ENCODE measurements at regions of chr16 and their contacts with region 1.

Region 1: DNA sequence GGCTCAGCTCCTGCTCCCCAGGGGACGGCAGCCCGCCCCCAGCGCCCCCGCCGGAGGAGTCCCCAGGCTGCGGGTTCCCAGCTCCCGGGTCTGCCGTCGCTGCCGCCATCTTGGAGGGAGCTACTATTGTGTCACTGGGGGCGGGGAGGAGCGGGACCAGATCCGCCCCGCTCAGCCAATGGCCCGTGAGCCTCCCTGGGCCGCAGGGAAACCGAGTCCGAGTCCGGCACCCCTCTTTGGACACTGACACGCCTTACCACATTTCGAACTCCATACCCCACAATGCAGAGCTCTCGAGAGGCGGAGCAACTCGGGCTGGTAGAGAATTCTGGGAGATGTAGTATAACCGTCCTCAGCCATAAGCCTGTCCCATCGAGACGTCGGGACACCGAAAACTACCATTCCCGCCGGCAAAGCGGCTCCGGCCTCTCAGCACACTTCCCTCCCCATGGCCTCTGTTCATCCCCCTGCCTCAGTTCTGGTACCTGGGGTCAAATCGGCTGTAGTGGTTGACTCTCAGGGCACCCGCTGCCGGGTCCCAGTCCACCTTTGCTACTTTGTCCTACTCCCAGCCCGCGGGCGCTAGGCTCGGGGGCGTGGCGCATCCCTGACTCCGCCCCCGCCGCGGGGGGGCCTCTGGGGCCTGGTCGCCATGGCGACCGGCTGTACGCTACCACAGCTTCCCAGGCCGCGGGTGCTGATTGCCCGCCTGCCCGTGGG is at the starts of genes RANBP10 and TSNAXIP1:
- DNase-seq: peak; percentile 91 to 99 (median 98)
- H3K4me3 ChIP-seq: peak within 1 kb of the TSS; percentile 62 to 100 (median 93)
- H3K27ac ChIP-seq: peak within 1 kb of the TSS in 57 of 59 donors; percentile 3 to 93 (median 80)
- H3K27me3 ChIP-seq: no peaks in the 10 kb centered on the region
- CTCF ChIP-seq: peak in 35 of 56 donors; percentile 2 to 66 (median 24)
- total RNA-seq, gene RANBP10: 13.9 to 32.6 (median 21.2) TPM
- total RNA-seq, gene TSNAXIP1: 3.1 to 16.5 (median 8.5) TPM

Region 2: GRCh38 chr16:67561824-67562525 is 244.6 kb before region 1 on chr16:
- intact Hi-C with region 1: loop called (anchors 2 to 5 kb)
- DNase-seq: peak; percentile 79 to 93 (median 88)
- H3K4me3 ChIP-seq: peak overlapping the region; percentile 40 to 100 (median 92)
- H3K27ac ChIP-seq: peak overlapping the region; percentile 31 to 100 (median 99)
- H3K27me3 ChIP-seq: no peaks in the 10 kb centered on the region
- CTCF ChIP-seq: peak in 21 of 56 donors; percentile 6 to 46 (median 23)

Region 3: GRCh38 chr16:67841764-67842508 is 35.3 kb after region 1 on chr16 and contains the start of gene THAP11:
- intact Hi-C with region 1: loop called in 1 of 2 experiments (anchors 2 kb)
- DNase-seq: peak; percentile 88 to 95 (median 91)
- H3K4me3 ChIP-seq: peak within 1 kb of the TSS; percentile 73 to 100 (median 94)
- H3K27ac ChIP-seq: peak within 1 kb of the TSS; percentile 97 to 100 (median 100)
- H3K27me3 ChIP-seq: no peaks in the 10 kb centered on the region
- CTCF ChIP-seq: peak; percentile 77 to 98 (median 94)
- total RNA-seq, gene THAP11: 17.7 to 30.0 (median 24.0) TPM

Region 4: DNA sequence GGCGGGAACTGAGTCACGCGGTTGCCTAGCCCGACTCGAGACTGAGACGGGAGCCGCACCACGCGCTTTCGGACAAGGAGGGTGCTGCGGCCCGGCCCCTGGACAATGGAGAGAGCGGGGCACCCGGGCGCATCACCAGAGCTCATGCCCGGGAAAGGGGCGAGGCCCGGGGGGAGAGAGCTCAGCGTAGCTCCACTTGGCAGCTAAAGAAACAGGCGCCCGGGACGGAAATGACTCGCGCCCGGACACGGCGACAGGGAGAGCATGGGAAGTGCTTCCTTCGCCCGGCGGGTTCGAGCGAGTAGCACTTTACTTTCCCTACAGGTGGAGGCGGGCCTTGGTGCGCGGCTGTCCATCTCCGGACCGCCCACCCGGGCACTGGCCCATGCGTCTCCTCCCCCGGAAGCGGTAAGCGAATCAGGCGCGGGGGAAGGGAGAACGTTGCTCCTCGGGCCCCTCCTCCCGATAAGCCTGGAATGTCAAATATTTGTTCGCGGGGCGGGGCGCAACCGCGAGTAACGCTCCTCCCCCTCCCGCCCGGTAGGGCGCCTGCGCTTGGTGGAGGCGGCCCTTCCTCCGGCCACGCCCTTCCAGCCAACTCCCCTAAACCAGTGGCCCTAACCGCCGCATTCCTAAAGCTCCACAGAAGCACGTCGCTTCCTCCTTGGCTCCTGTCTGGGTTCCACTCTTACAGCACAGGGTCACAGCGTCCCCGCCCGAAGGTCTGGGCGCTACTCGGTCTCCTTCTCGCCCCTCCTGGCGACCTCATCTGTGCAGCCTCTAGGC is 430.8 kb after region 1 on chr16:
- intact Hi-C with region 1: loop called in 1 of 2 experiments (anchors 5 kb)
- DNase-seq: peak; percentile 92 to 98 (median 96)
- H3K4me3 ChIP-seq: peak overlapping the region; percentile 51 to 93 (median 75)
- H3K27ac ChIP-seq: peak overlapping the region; percentile 20 to 91 (median 79)
- H3K27me3 ChIP-seq: no peaks in the 10 kb centered on the region
- CTCF ChIP-seq: peak in 27 of 56 donors; percentile 6 to 60 (median 29)